ENCODE measurements at regions of chr9 and their contacts with region 1.

Region 1: GRCh38 chr9:113275157-113276131 is at the starts of genes CDC26 and PRPF4:
- DNase-seq: peak; percentile 92
- ATAC-seq: peak; percentile 88
- H3K4me3 Mint-ChIP-seq: no peak within 1 kb of the TSS
- H3K27ac Mint-ChIP-seq: no peak within 1 kb of the TSS
- H3K4me1 Mint-ChIP-seq: peaks cover 9% of the 10 kb centered on the region
- H3K27me3 Mint-ChIP-seq: no peaks in the 10 kb centered on the region
- CTCF ChIP-seq: no peak
- total RNA-seq, gene CDC26: 30.4 and 31.7 TPM in 2 replicates
- total RNA-seq, gene PRPF4: 32.8 and 36.7 TPM in 2 replicates

Region 2: GRCh38 chr9:111483862-111484571 is 1791.4 kb before region 1 on chr9 and contains the start of gene ECPAS:
- CTCF ChIA-PET with region 1: no interaction called
- POLR2A ChIA-PET with region 1: interaction called, 3 read pairs
- intact Hi-C with region 1: loop called (anchors 5 kb)
- DNase-seq: peak; percentile 77
- ATAC-seq: peak; percentile 66
- H3K4me3 Mint-ChIP-seq: peak within 1 kb of the TSS; percentile 88
- H3K27ac Mint-ChIP-seq: peak within 1 kb of the TSS; percentile 86
- H3K4me1 Mint-ChIP-seq: peaks cover 26% of the 10 kb centered on the region
- H3K27me3 Mint-ChIP-seq: peaks cover 4% of the 10 kb centered on the region
- CTCF ChIP-seq: no peak
- total RNA-seq, gene ECPAS: 74.2 and 81.9 TPM in 2 replicates

Region 3: GRCh38 chr9:113221003-113221799 is 54.2 kb before region 1 on chr9 and contains the starts of genes FKBP15 and SLC31A1:
- CTCF ChIA-PET with region 1: interaction called, 11 read pairs
- POLR2A ChIA-PET with region 1: interaction called, 30 read pairs
- intact Hi-C with region 1: loop called (anchors 1 kb)
- DNase-seq: peak; percentile 94
- ATAC-seq: peak; percentile 95
- H3K4me3 Mint-ChIP-seq: peak within 1 kb of the TSS; percentile 96
- H3K27ac Mint-ChIP-seq: peak within 1 kb of the TSS; percentile 94
- H3K4me1 Mint-ChIP-seq: peaks cover 49% of the 10 kb centered on the region
- H3K27me3 Mint-ChIP-seq: no peaks in the 10 kb centered on the region
- CTCF ChIP-seq: no peak
- total RNA-seq, gene FKBP15: 48.3 and 49.1 TPM in 2 replicates
- total RNA-seq, gene SLC31A1: 5.7 and 7.3 TPM in 2 replicates

Region 4: DNA sequence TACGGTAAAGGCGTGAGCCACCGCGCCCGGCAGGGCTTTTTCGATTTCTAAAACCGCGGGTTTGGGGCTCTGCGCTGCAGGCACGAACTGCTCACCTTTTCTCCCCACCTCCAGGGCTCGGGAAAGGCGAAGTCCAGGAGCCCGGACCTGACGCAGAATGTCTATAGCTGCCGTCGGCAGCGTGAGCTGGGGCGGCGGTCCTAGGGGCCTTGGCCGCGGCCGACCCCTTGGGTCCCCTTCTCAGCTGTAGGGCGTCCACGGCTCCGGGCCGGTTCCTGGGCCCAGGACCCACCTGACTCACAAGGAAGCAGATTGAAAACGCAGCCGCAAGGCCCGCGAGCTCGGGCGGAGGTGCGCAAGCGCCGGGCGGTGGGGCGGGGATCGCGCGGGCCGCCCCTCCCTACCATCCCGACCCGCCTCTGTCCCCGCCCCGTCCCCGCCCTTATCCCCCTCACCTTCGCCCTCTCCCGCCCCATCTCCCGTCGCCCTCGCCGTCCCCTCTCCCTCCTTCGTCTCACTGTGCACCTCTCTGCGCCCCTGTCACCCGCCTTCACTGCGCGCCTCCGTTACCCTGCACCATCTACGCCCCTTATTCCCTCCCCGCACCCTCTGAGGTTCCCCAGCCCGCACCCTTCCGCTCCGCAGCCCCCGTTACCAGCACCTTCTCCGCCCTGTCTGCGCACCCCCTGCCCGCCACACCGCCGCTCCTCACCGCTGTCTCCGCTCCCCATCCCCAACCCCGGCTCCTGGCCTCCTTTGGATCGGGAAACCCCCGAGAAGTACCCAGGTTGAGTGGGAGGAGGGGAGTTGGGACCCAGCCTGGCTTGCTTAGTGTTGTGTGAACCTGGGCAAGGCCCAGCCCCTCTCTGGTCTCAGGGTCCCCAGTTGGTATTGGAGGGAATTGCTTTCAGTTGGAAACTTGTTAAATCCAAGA is 101.5 kb after region 1 on chr9 and contains the start of gene HDHD3:
- CTCF ChIA-PET with region 1: no interaction called
- POLR2A ChIA-PET with region 1: interaction called, 20 read pairs
- intact Hi-C with region 1: loop called (anchors 1 kb)
- DNase-seq: peak; percentile 78
- ATAC-seq: peak; percentile 90
- H3K4me3 Mint-ChIP-seq: peak within 1 kb of the TSS; percentile 92
- H3K27ac Mint-ChIP-seq: peak within 1 kb of the TSS; percentile 81
- H3K4me1 Mint-ChIP-seq: peaks cover 32% of the 10 kb centered on the region
- H3K27me3 Mint-ChIP-seq: no peaks in the 10 kb centered on the region
- CTCF ChIP-seq: no peak
- total RNA-seq, gene HDHD3: 23.4 and 23.9 TPM in 2 replicates

Region 5: DNA sequence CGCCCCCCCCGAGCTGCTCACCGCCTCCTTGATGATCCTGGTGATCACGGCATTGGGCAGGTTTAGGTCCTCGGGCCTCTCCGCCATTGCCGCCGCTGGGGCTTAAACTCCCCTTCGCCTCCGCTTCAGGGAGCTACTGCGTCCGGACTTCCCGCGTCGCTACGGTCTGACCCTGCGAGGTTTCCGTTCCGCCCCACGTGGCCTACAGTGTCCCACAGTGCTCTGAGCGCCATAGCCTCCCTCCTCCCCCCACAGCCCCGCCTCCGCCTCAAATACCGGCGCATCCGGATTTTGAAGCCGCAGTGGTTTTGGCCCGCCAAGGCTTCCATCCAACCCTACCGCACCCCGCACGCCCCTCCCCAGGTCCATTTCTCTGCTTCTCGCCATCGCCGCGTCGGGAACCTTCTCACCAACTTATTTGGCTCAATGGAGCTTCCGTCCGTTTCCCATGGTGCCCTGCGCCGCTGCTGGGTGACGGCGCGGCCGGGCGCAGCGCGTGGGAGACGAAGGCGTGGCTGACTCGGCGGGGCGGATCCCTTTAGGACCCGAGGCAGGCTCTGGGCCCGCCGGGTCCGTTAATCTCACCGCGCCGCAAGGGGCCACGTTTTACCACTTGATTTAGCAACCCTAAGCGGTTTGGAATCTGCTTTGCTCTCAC is 134.9 kb after region 1 on chr9 and contains the starts of genes C9orf43 and POLE3:
- CTCF ChIA-PET with region 1: interaction called, 15 read pairs
- POLR2A ChIA-PET with region 1: interaction called, 41 read pairs
- intact Hi-C with region 1: loop called (anchors 1 kb)
- DNase-seq: peak; percentile 94
- ATAC-seq: peak; percentile 89
- H3K4me3 Mint-ChIP-seq: peak within 1 kb of the TSS; percentile 98
- H3K27ac Mint-ChIP-seq: peak within 1 kb of the TSS; percentile 99
- H3K4me1 Mint-ChIP-seq: peaks cover 31% of the 10 kb centered on the region
- H3K27me3 Mint-ChIP-seq: no peaks in the 10 kb centered on the region
- CTCF ChIP-seq: no peak
- total RNA-seq, gene C9orf43: 0.76 and 1.2 TPM in 2 replicates
- total RNA-seq, gene POLE3: 48.0 and 55.5 TPM in 2 replicates

Region 6: GRCh38 chr9:113468716-113469448 is 193.4 kb after region 1 on chr9:
- CTCF ChIA-PET with region 1: no interaction called
- POLR2A ChIA-PET with region 1: interaction called, 11 read pairs
- intact Hi-C with region 1: no loop called
- DNase-seq: no peak
- ATAC-seq: no peak
- H3K4me3 Mint-ChIP-seq: no peak overlapping the region
- H3K27ac Mint-ChIP-seq: no peak overlapping the region
- H3K4me1 Mint-ChIP-seq: no peaks in the 10 kb centered on the region
- H3K27me3 Mint-ChIP-seq: no peaks in the 10 kb centered on the region
- CTCF ChIP-seq: no peak

Region 7: DNA sequence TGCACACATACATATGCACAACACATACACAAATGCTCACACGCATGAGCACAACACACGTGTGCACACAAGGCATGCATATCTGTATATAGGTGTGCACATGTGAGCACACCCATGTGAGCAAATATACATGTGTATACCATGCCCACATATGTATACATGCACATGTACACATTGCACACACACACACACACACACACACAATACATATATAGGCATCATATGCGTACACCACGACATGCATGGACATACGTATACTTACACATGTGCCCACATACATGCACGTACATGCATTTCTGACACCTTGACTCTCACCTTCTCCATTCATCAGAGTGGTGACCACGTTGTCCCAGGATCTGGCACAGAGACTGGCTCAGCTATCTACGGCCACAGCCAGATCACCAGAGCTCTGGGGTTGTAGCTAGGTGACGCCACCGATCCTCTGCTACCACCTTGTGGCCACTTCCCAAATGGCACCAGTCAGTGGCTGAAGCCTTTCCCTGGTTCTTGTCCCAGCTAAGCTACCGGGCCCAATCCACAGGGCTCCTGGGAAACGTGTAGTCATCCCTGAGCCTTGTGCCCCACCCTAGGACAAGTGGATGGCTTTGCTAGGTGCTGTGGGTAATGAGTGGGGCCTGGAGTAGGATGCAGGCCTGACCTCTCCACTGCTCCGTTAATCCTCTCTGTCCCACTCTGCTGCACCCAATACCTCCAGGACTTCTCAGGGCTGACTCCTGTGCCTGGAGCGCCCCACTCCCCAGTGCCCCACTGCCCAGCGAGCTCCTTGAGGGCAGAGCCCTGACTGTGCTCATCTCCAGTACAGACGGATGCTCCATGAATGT is 382.5 kb after region 1 on chr9:
- CTCF ChIA-PET with region 1: interaction called, 91 read pairs
- POLR2A ChIA-PET with region 1: interaction called, 6 read pairs
- intact Hi-C with region 1: loop called (anchors 1 kb)
- DNase-seq: peak; percentile 74
- ATAC-seq: peak; percentile 97
- H3K4me3 Mint-ChIP-seq: no peak overlapping the region
- H3K27ac Mint-ChIP-seq: no peak overlapping the region
- H3K4me1 Mint-ChIP-seq: no peaks in the 10 kb centered on the region
- H3K27me3 Mint-ChIP-seq: peaks cover 16% of the 10 kb centered on the region
- CTCF ChIP-seq: peak; percentile 84

Measured in activated B cell treated with CpG ODN at 0.5 μM for 24 hours (primary cell).